PC-9 (cell line): ENCODE measurements at regions of chr2 and their contacts with region 1.

Region 1: GRCh38 chr2:44324971-44325426 is 36.3 kb downstream of the PREPL start:
- DNase-seq: no peak
- H3K4me3 ChIP-seq: no peak overlapping the region
- H3K27ac ChIP-seq: no peak overlapping the region
- H3K4me1 ChIP-seq: no peaks in the 10 kb centered on the region
- H3K27me3 ChIP-seq: no peaks in the 10 kb centered on the region
- CTCF ChIP-seq: no peak

Region 2: DNA sequence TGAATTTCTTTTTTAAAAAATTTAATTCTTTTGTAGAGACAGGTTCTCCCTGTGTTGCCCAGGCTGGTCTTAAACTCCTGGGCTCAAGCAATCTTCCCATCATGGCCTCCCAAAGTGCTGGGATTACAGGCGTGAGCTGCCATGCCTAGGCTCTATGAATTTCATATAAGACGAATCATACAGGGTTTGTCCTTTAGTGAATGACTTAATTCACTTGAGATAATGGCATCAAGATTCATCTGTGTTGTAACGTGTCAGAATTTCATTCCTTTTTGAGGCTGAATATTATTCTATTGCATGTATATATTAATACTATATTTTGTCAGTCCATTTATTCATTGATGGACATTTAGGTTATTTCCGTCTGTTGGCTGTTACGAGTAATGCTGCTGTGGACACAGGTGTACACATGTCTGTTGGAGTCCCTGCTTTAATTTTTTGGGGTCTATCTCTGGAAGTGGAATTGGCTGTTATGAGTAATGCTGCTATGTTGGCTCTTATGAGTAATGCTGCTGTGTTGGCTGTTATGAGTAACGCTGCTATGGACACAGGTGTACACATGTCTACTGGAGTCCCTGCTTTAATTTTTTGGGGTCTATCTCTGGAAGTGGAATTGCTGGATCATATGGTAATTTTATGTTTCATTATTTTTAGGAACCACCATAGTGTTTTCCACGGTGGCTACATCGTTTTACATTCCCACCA is 247.3 kb after region 1 on chr2:
- CTCF ChIA-PET with region 1: no interaction called
- POLR2A ChIA-PET with region 1: interaction called, 20 read pairs
- intact Hi-C with region 1: no loop called
- DNase-seq: peak; percentile 9 to 66
- H3K4me3 ChIP-seq: no peak overlapping the region
- H3K27ac ChIP-seq: no peak overlapping the region
- H3K4me1 ChIP-seq: peaks cover 29% of the 10 kb centered on the region
- H3K27me3 ChIP-seq: no peaks in the 10 kb centered on the region
- CTCF ChIP-seq: no peak